HCT116 (cell line): ENCODE measurements at regions of chr22 and their contacts with region 1.

Region 1: DNA sequence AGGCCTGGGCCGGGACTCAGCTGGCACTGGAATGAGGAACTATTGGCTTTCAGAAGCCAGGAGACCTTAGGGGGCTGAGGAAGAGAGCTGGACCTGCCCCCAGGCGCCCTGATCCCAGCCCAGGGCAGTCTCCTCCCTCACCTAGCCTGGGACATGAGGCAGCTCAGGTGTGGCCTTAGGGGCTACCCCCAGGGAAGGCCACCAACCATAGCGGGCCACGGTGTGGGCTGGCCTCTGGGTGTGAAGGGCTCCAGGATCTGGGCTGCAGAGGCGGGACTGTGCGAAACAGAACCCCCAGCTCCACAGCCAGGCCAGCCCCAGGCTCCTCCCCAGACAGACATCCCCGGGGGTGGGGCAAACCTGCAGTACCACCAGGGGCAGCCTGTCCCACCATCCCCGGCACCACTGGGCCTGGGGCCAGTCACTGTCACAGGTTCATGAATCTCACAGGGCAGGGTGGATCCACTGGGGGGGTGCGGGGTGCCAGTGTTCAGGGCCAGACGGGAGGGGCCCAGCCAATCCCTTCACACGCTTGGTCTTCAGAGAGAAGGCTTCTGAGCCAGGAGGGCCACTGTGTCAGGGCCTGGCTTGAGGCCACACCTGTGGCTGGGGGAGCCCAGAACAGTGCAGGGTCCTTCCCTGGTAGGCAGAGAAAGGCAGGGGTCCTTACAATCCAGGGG is 3.5 kb downstream of the PLXNB2 start:
- DNase-seq: no peak
- ATAC-seq: peak; percentile 33
- H3K4me3 ChIP-seq: peak overlapping the region; percentile 20 to 70
- H3K27ac ChIP-seq: peak overlapping the region; percentile 99
- H3K4me1 ChIP-seq: peaks cover 51 to 84% of the 10 kb centered on the region in 2 experiments
- H3K27me3 ChIP-seq: no peaks in the 10 kb centered on the region
- CTCF ChIP-seq: peak in 2 of 3 experiments; percentile 7 to 13; a peak in 1 of 6 replicates
- POLR2A ChIP-seq: no peak
- RAD21 ChIP-seq: no peak

Region 2: DNA sequence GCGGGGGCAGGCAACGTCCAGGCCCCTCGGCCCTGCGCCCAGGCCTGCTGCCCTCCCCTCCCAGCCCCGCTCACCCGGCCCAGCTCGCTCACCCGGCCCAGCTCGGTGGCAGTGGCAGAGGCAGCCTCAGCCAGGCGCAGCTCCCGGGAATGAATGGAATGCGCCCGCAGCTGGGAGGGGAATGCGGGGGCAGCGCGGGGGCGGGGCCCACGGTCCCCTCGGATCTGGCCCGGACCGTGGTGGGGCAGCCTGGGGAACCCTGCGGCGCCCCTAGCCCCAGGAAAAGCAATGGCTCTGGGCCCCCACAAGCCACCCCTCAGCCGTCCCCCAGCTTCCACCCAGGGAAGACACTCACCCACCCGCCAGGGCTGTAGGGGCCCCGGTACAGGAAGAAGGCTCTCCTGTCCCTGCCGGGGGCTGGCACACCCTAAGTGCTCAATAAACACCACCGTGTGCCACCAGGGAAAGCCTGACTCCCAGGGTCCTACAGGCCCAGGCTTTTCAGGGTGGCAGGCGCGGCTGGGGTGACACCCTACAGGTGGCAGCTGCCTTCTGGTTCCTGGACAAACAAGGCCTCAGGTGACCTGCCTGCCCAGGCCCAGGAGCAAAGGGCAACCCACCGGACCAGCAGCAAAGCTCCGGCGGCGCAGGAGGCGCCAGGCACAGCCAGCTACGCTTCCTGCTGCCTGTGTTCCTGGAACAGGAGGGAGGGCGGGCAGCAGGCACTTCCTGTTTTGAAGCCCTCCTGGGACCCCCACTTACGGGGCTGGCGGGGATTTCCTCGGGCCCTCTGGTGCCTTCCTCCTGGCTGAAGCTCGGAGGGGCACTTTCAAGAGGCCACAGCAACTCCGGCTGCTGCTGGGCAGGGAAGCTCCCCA is 10.3 kb before region 1 on chr22:
- CTCF ChIA-PET with region 1: interaction called, 3 read pairs
- POLR2A ChIA-PET with region 1: interaction called, 11 read pairs
- RAD21 ChIA-PET with region 1: no interaction called
- intact Hi-C with region 1: no loop called
- DNase-seq: no peak
- ATAC-seq: peak; percentile 79
- H3K4me3 ChIP-seq: peak overlapping the region; percentile 40 to 56
- H3K27ac ChIP-seq: peak overlapping the region; percentile 99
- H3K4me1 ChIP-seq: peaks cover 53 to 65% of the 10 kb centered on the region in 2 experiments
- H3K27me3 ChIP-seq: no peaks in the 10 kb centered on the region
- CTCF ChIP-seq: no peak
- POLR2A ChIP-seq: no peak
- RAD21 ChIP-seq: no peak

Region 3: GRCh38 chr22:50444663-50445062 is 140.7 kb after region 1 on chr22:
- CTCF ChIA-PET with region 1: no interaction called
- POLR2A ChIA-PET with region 1: no interaction called
- RAD21 ChIA-PET with region 1: no interaction called
- intact Hi-C with region 1: no loop called
- DNase-seq: peak; percentile 6
- ATAC-seq: no peak
- H3K4me3 ChIP-seq: no peak overlapping the region
- H3K27ac ChIP-seq: no peak overlapping the region
- H3K4me1 ChIP-seq: peaks cover 0 to 4% of the 10 kb centered on the region in 2 experiments; a peak in 2 of 4 replicates
- H3K27me3 ChIP-seq: no peaks in the 10 kb centered on the region
- CTCF ChIP-seq: no peak
- POLR2A ChIP-seq: no peak
- RAD21 ChIP-seq: no peak